Adrenal gland (tissue), 19 donors: ENCODE measurements at regions of chr4 and their contacts with region 1.

Region 1: DNA sequence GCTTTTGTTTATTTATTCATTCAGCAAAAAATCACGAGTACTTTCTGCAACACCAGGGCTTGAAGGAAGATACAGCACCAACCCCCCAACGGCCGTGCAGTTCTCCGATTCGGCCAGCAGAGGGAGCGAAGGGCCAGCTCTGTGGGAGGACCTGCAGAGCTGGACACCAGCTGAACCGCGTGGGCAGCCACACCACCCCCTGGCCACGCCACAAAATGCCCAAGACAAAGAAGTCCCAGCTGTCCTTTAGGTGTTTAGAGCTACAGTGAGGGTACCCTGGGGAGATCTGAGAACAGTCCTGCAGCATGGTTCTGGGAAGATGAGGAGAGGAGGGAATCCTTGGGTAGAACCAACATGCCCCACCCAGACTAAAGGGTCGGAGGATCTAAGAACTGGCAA is 83.1 kb downstream of the RELL1 start:
- DNase-seq: peak; percentile 76 to 93 (median 84)
- H3K4me3 ChIP-seq: no peak overlapping the region
- H3K27ac ChIP-seq: no peak overlapping the region
- H3K4me1 ChIP-seq: no peaks in the 10 kb centered on the region
- H3K27me3 ChIP-seq: no peaks in the 10 kb centered on the region
- CTCF ChIP-seq: peak; percentile 94 to 98 (median 96)
- POLR2A ChIP-seq: no peak

Region 2: DNA sequence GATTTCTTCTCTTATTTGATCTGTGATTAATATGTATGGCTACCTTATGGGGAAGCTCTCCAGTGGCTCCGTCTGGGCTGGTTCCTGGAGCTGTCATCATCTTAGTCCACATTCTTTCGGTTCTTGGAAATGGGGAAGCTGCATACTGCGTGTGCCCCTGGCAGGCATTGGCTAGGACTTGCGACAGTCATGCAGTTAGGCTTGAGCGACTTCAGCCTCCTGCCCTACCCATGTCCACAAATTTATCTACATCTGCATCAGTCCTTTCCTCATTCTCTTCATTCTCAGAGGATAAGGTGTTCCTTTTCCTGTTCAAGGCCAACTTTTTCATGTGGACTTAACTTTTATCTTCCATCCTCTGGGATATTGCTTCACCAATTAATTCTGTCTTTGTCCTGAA is 131.1 kb before region 1 on chr4:
- intact Hi-C with region 1: no loop called
- DNase-seq: peak in 3 of 7 donors; percentile 1 to 19 (median 16)
- H3K4me3 ChIP-seq: no peak overlapping the region
- H3K27ac ChIP-seq: no peak overlapping the region
- H3K4me1 ChIP-seq: no peaks in the 10 kb centered on the region
- H3K27me3 ChIP-seq: no peaks in the 10 kb centered on the region
- CTCF ChIP-seq: no peak
- POLR2A ChIP-seq: no peak

Region 3: GRCh38 chr4:37666625-37667071 is 63.6 kb after region 1 on chr4:
- intact Hi-C with region 1: no loop called
- DNase-seq: peak in 6 of 7 donors; percentile 32 to 73 (median 51)
- H3K4me3 ChIP-seq: no peak overlapping the region
- H3K27ac ChIP-seq: peak overlapping the region in 3 of 5 donors; percentile 2 to 74 (median 5)
- H3K4me1 ChIP-seq: peaks cover 13 to 60% of the 10 kb centered on the region in 2 donors
- H3K27me3 ChIP-seq: no peaks in the 10 kb centered on the region
- CTCF ChIP-seq: peak in 2 of 6 experiments; percentile 8 to 27
- POLR2A ChIP-seq: no peak

Region 4: DNA sequence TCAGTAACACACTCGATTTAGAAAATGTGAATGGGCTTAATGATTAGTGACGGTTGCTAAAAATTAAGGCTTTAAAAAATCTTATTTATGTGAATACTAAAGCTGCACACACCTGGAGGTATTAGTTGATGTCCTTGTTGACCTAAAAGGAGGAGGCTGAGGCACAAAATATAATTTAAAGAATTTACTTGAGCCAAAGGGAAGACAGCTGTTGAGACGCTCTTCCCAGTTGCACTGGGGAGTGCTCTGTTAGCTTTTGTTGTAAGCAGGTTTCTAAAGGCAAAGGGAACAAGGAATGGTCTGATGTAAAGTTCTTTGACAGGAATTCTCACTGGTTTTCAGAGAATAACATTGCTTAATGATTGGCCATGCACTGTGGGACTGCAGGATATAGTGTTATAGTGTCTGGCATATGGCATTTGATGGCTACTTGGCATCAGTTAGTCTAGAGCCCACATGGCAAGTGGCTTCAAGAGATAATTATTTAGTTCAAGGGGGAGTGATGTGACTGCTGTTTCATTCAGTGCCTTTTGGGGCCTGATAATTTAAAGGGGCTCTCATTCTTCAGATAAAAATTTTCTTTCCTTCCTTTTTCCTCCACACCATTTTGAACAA is 192.6 kb after region 1 on chr4:
- intact Hi-C with region 1: loop called (anchors 5 kb)
- DNase-seq: no peak
- H3K4me3 ChIP-seq: no peak overlapping the region
- H3K27ac ChIP-seq: no peak overlapping the region
- H3K4me1 ChIP-seq: no peaks in the 10 kb centered on the region
- H3K27me3 ChIP-seq: no peaks in the 10 kb centered on the region
- CTCF ChIP-seq: no peak
- POLR2A ChIP-seq: no peak